Posterior cingulate gyrus (tissue), 11 donors: ENCODE measurements at regions of chr6 and their contacts with region 1.

Region 1: GRCh38 chr6:32413427-32414047 is 6.6 kb upstream of the BTNL2 start:
- DNase-seq: peak; percentile 57 to 96 (median 82)

Region 2: GRCh38 chr6:31097568-31098053 is 1315.9 kb before region 1 on chr6:
- intact Hi-C with region 1: no loop called
- DNase-seq: no peak

Region 3: DNA sequence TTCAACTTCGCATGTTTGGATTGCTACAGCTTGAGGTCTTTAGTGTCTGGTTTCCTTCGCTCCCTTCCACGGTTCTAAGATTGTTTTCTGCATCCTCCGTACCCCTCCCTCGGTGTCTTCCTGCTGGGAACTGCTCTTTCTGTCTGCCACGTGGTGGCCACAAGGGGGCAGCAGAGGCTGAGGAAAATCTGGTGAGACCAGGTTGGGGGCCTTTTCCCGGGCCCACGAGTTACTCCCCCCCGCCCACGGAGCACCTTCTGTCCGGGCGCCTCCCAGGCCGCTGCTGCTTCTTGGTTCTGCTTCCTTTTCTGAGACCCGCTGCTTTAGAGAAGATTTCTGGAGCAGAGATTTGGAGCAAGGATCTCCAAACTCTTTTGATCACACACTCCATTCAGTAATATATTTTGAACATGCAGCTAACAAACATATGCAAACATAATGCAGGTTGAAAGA is 168.6 kb before region 1 on chr6:
- intact Hi-C with region 1: loop called (anchors 5 kb)
- DNase-seq: peak; percentile 51 to 97 (median 84)

Region 4: GRCh38 chr6:32700391-32701040 is 287.0 kb after region 1 on chr6:
- intact Hi-C with region 1: loop called (anchors 2 kb)
- DNase-seq: peak in 4 of 10 donors; percentile 17 to 75 (median 28)

Region 5: GRCh38 chr6:32796848-32797776 is 383.6 kb after region 1 on chr6:
- intact Hi-C with region 1: loop called (anchors 1 kb)
- DNase-seq: peak; percentile 51 to 94 (median 82)

Region 6: DNA sequence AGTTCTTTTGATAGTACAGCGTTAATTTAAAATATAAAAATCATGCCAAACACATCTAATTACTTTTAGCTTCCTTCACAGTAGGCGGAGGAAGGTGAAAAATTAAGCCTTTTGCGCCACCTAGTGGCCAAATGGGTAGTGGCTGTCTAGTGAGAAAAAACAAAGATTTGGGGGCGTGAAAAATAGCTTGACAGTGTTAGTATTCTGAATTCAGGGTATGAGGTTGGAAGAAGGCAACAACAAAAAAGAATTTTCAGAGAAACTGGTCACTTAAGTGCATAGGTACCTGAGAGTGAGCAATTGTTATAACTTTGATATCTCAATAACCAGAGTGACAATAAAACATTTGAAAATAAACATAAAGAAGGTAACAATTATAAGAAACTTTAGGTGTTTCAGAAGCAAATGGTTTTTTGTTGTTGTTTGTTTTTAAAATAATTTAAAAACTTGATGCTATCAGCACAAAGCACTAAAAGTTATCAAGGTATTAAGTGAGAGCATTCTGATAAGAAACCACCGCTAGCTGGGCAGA is 454.8 kb after region 1 on chr6:
- intact Hi-C with region 1: loop called (anchors 5 kb)
- DNase-seq: peak in 9 of 10 donors; percentile 34 to 94 (median 81)